ENCODE measurements at regions of chr17 and their contacts with region 1.

Region 1: DNA sequence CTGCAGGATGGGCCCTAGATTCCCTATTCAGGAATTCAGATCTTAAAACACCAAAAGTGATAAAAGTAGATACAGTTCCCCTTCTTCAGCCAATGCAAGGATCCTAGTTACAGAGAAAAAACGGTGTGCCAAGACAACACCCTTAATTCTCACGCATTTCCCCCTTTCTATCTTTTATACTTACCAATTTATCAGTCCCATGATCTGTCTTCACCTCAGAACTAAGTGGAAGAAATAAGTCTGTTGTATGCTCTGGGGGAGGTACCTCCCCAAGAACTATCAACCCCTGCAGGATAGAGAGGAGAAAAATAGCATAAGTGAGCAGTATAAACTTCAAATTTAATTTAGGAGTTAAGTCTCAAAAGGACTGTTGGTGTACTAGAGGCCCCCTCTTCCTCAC is 83.2 kb downstream of the STH start:
- DNase-seq: no peak
- CTCF ChIP-seq: no peak

Region 2: GRCh38 chr17:45740553-45741330 is 341.5 kb before region 1 on chr17:
- in situ Hi-C with region 1: no loop called
- DNase-seq: peak; percentile 50
- CTCF ChIP-seq: no peak

Region 3: DNA sequence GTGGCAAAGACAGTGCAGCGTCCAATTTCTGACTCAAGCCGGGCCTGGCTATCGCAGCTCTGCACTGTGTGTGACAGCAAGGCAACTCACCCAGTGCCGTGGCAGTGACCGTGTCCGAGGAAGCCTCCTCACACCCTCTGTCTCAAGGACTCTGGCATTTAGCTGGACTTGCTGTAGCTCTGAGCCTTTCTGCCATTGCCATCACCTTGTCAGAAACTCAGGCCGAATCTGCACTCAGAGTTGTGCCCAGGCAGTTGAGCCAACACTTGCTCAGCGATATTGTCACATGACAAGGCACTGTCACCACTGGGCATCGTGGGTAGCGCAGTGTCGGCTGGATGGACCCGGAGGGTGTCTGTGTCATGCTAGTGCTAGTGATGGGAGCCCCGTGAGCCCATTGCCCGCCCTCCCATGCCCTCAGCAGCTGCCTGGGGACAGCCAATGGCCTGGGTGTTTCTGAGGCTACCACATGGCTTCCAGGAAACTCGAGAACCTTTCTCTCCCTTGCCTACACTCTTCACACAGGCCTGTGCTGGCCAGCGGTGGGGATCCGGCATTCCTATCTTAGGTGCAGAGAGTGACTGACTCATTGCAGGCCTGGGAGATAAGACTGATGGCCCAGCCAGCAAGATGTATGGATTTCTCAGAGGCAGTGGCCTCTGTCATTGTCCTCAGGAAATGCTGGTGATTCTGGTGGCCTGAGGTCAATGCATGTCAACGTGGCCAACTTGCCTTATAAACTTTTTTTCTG is 105.3 kb before region 1 on chr17:
- in situ Hi-C with region 1: no loop called
- DNase-seq: no peak
- CTCF ChIP-seq: no peak

Region 4: GRCh38 chr17:46020023-46020761 is 62.1 kb before region 1 on chr17:
- in situ Hi-C with region 1: no loop called
- DNase-seq: peak; percentile 56
- CTCF ChIP-seq: no peak

Region 5: GRCh38 chr17:46139432-46140210 is 57.4 kb after region 1 on chr17:
- in situ Hi-C with region 1: loop called (anchors 10 kb)
- DNase-seq: no peak
- CTCF ChIP-seq: no peak

Region 6: DNA sequence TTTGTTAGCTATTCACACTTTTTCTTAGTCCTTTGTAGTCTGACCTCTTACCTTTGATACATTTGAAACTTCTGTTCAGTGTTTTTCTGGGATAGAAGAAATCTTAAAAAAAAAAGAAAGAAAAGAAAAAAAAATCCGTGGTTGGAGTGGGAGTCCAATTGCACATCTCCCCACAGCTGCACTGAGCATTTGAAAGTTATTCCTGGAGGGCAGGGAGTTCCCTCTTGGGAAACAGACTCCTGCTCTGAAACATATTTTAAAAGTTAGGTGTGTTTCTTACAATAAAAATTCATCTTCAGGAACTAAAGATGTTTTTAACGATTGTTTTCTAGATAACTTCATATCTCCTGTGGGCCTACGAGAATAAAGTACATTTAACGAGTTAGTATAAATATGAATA is 672.0 kb after region 1 on chr17:
- in situ Hi-C with region 1: no loop called
- DNase-seq: no peak
- CTCF ChIP-seq: no peak